ENCODE measurements at regions of chr18 and their contacts with region 1.

Region 1: GRCh38 chr18:31658670-31659575 is 25.5 kb downstream of the B4GALT6 start:
- DNase-seq: peak; percentile 89
- ATAC-seq: peak; percentile 81
- H3K4me3 ChIP-seq: peak overlapping the region; percentile 56
- H3K27ac ChIP-seq: peak overlapping the region; percentile 98
- H3K4me1 ChIP-seq: peaks cover 37% of the 10 kb centered on the region
- H3K27me3 ChIP-seq: no peaks in the 10 kb centered on the region
- CTCF ChIP-seq: no peak
- EP300 ChIP-seq: peak in 1 of 2 experiments; percentile 78; a peak in 2 of 4 replicates
- POLR2A ChIP-seq: no peak; the same call in 1 of the 2 replicates
- RAD21 ChIP-seq: no peak

Region 2: DNA sequence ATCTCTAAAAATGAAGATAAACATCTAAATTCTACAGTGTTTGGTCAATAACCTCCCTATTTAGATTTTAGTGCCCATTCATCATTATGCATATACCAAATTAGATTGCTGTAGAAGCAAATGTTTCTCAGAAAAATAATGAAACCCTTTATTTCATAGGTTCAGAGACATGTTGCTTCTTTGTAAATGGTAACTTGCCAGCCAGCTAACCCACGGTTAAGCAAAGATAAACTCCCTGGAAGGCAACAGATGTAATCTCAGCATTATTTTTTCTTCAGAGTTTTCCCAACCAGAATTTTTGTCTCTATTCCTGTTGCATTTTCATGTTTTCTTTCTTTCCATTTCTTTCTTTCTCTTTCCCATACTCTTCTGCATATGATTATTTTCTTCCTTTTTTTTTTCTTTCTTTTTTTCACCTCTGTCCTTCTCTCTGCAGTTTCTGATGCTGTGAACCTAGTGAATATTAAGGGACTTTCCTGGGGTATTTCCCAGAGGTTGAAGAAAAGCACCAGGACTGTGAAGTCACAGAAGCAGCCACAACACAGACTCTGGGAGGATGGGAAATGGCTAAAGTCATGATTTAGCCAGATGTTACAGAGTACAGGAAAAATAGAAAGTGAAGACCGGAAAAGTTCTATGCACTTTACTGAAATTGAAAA is 391.0 kb before region 1 on chr18:
- CTCF ChIA-PET with region 1: no interaction called
- POLR2A ChIA-PET with region 1: no interaction called
- RAD21 ChIA-PET with region 1: no interaction called
- SMC1A ChIA-PET with region 1: no interaction called
- in situ Hi-C with region 1: no loop called
- intact Hi-C with region 1: loop called (anchors 10 kb)
- DNase-seq: peak; percentile 44
- ATAC-seq: peak; percentile 89
- H3K4me3 ChIP-seq: no peak overlapping the region
- H3K27ac ChIP-seq: peak overlapping the region; percentile 60
- H3K4me1 ChIP-seq: peaks cover 6% of the 10 kb centered on the region
- H3K27me3 ChIP-seq: no peaks in the 10 kb centered on the region
- CTCF ChIP-seq: no peak
- EP300 ChIP-seq: peak; percentile 54 to 64; a peak in 2 of 4 replicates
- POLR2A ChIP-seq: no peak
- RAD21 ChIP-seq: no peak

Region 3: DNA sequence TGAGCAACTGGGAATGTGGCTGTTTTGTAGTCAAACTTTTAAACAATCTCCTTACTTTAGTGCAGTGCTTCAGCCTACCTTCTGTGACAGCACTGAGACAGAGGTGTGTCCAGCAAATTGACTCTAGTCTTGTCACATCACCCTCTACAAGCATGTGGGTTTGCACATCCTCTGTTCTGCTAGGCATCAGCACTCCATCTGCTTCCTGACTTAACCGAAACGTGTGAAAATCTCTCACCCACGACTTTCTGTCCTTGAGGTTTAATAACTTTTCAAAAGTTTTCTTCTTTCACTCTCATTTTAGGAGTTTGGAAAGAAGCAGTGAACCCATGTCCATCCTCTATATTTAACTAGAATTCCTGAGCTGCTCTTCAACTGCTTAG is 24.6 kb before region 1 on chr18:
- CTCF ChIA-PET with region 1: interaction called, 3 read pairs
- POLR2A ChIA-PET with region 1: interaction called, 6 read pairs
- RAD21 ChIA-PET with region 1: interaction called, 10 read pairs
- SMC1A ChIA-PET with region 1: interaction called, 20 read pairs
- in situ Hi-C with region 1: no loop called
- intact Hi-C with region 1: loop called (anchors 2 kb)
- DNase-seq: peak; percentile 85
- ATAC-seq: peak; percentile 98
- H3K4me3 ChIP-seq: no peak overlapping the region
- H3K27ac ChIP-seq: peak overlapping the region; percentile 70
- H3K4me1 ChIP-seq: peaks cover 35% of the 10 kb centered on the region
- H3K27me3 ChIP-seq: no peaks in the 10 kb centered on the region
- CTCF ChIP-seq: no peak
- EP300 ChIP-seq: peak in 1 of 2 experiments; percentile 51; a peak in 1 of 4 replicates
- POLR2A ChIP-seq: no peak
- RAD21 ChIP-seq: peak; percentile 22; the same call in 1 of the 2 replicates

Region 4: DNA sequence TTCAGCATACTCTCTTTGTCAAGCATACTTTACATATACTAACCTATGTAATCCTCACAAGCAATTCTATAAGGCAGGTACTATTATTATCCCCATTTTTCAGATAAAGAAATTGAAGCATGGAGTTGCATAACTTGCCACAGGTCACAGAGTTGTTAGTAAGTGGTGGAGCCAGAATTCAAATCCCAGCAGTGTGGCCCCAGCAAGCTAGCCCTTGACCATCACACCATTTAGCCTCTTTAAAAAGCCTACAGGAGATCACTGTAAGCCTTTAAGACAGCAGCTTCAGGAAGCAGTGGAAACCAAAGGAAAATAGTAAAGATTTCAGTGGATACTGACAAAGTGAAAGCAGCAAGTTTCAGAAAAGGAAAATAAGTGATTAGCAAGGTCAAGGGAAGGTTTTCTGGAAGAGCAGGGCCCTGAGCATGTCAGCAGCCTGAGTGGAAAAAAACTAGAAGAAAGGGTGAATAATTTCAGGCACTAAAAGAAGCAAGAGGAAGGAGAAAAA is 13.8 kb after region 1 on chr18:
- CTCF ChIA-PET with region 1: interaction called, 135 read pairs
- POLR2A ChIA-PET with region 1: interaction called, 64 read pairs
- RAD21 ChIA-PET with region 1: interaction called, 168 read pairs
- SMC1A ChIA-PET with region 1: interaction called, 169 read pairs
- in situ Hi-C with region 1: no loop called
- intact Hi-C with region 1: loop called (anchors 1 kb)
- DNase-seq: no peak
- ATAC-seq: peak; percentile 15; the same call in 2 of the 3 replicates
- H3K4me3 ChIP-seq: peak overlapping the region; percentile 25; the same call in 1 of the 2 replicates
- H3K27ac ChIP-seq: peak overlapping the region; percentile 54
- H3K4me1 ChIP-seq: peaks cover 10% of the 10 kb centered on the region
- H3K27me3 ChIP-seq: no peaks in the 10 kb centered on the region
- CTCF ChIP-seq: no peak
- EP300 ChIP-seq: no peak
- POLR2A ChIP-seq: no peak
- RAD21 ChIP-seq: no peak

Region 5: GRCh38 chr18:31685097-31686082 is 26.5 kb after region 1 on chr18:
- CTCF ChIA-PET with region 1: interaction called, 135 read pairs
- POLR2A ChIA-PET with region 1: interaction called, 64 read pairs
- RAD21 ChIA-PET with region 1: interaction called, 168 read pairs
- SMC1A ChIA-PET with region 1: interaction called, 169 read pairs
- in situ Hi-C with region 1: no loop called
- intact Hi-C with region 1: loop called (anchors 1 kb)
- DNase-seq: peak; percentile 40
- ATAC-seq: peak; percentile 71
- H3K4me3 ChIP-seq: peak overlapping the region; percentile 75
- H3K27ac ChIP-seq: peak overlapping the region; percentile 88
- H3K4me1 ChIP-seq: peaks cover 13% of the 10 kb centered on the region
- H3K27me3 ChIP-seq: no peaks in the 10 kb centered on the region
- CTCF ChIP-seq: peak; percentile 42 to 48 (median 47); a peak in 4 of 6 replicates
- EP300 ChIP-seq: no peak
- POLR2A ChIP-seq: peak; percentile 79
- RAD21 ChIP-seq: 0 out of 2 replicates have a peak, but pooled peaks have one; percentile 15

Region 6: GRCh38 chr18:31996007-31996406 is 337.1 kb after region 1 on chr18:
- CTCF ChIA-PET with region 1: no interaction called
- POLR2A ChIA-PET with region 1: no interaction called
- RAD21 ChIA-PET with region 1: no interaction called
- SMC1A ChIA-PET with region 1: no interaction called
- in situ Hi-C with region 1: no loop called
- intact Hi-C with region 1: no loop called
- DNase-seq: no peak
- ATAC-seq: no peak
- H3K4me3 ChIP-seq: no peak overlapping the region
- H3K27ac ChIP-seq: no peak overlapping the region
- H3K4me1 ChIP-seq: peaks cover 7% of the 10 kb centered on the region
- H3K27me3 ChIP-seq: no peaks in the 10 kb centered on the region
- CTCF ChIP-seq: no peak
- EP300 ChIP-seq: no peak
- POLR2A ChIP-seq: no peak
- RAD21 ChIP-seq: no peak